Activated CD8-positive, alpha-beta T cell treated with anti-CD3 and anti-CD28 coated beads for 36 hours (primary cell): ENCODE measurements at regions of chr18 and their contacts with region 1.

Region 1: DNA sequence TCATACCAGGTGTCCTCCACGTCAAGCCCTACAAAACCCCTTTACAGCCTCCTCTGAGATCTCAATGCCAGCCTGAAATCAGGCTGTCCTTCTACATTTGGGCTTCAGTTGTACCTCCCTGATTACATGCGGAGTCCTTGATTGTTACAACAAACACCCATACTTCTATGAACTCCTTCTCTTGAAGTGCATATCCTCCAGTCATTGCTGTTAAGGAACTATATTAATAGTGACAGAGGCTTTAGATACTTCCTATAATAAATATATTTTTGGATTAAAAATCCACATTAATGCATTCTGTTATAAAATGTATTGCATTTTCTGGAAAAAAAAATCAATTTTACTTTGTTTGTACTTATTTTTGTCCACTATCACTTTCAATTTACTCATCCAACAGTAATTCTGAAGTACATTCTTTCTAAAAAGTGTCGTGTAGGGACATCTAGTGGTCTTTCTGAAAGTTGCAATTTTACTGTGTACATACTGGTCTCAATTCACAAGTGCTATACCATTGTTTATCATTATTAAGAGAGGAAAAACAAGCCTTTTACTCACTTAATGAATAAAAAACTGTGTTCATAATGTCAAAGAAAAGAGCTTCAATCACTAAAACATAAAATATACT is 316.4 kb downstream of the DSEL start:
- DNase-seq: no peak
- ATAC-seq: peak; percentile 83
- H3K4me3 Mint-ChIP-seq: no peak overlapping the region
- H3K27ac Mint-ChIP-seq: no peak overlapping the region
- H3K4me1 Mint-ChIP-seq: no peaks in the 10 kb centered on the region
- H3K27me3 Mint-ChIP-seq: peaks cover 7% of the 10 kb centered on the region
- CTCF ChIP-seq: peak; percentile 60

Region 2: GRCh38 chr18:67104700-67105284 is 95.3 kb before region 1 on chr18:
- CTCF ChIA-PET with region 1: interaction called, 25 read pairs
- POLR2A ChIA-PET with region 1: no interaction called
- intact Hi-C with region 1: loop called (anchors 2 kb)
- DNase-seq: peak; percentile 74
- ATAC-seq: peak; percentile 79
- H3K4me3 Mint-ChIP-seq: no peak overlapping the region
- H3K27ac Mint-ChIP-seq: no peak overlapping the region
- H3K4me1 Mint-ChIP-seq: no peaks in the 10 kb centered on the region
- H3K27me3 Mint-ChIP-seq: peaks cover 3% of the 10 kb centered on the region
- CTCF ChIP-seq: peak; percentile 66

Region 3: DNA sequence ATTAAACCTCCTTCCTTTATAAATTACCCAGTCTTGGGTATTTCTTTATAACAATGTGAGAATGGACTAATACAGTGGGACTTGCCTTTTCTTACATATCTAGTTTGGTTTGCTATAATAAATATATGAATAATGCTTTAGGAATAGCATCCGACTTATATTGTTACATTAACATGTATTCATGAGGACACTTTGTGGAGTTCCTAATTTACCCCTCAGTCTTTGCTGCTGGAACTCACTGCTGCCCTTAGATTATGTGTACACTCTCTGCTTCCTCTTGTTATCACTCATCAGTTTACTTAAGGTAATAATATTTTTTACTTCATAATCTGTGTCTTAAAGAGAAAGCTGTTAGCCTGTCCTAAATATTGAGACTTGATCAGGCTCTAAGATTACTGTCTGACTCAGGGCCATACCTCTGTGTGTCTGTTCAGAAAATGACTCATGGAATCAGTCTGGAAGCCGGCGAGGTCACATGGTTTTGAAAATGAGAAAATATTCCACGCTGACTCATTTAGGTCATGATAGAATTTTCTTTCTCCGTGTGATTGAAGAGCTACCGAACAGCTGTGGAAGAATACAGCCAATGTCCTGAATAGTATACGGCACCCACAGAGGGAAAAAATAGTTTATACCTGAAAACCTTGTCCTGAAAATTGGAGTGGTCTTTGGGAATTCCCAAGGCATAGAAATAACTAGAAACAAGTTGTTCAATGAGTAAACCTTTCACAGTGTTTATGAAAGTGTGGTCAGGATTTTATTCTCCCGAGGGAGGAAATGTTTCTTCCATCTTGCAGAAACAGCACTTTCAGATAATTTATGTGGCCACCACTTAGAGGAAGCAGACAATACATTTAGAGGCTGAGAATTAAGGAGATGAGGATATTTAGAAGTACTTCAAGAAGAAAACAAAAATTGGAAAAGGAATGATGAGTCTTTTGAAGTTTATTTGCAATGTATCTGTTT is 160.1 kb after region 1 on chr18:
- CTCF ChIA-PET with region 1: no interaction called
- POLR2A ChIA-PET with region 1: no interaction called
- intact Hi-C with region 1: no loop called
- DNase-seq: peak; percentile 58
- ATAC-seq: peak; percentile 97
- H3K4me3 Mint-ChIP-seq: no peak overlapping the region
- H3K27ac Mint-ChIP-seq: no peak overlapping the region
- H3K4me1 Mint-ChIP-seq: peaks cover 14% of the 10 kb centered on the region
- H3K27me3 Mint-ChIP-seq: peaks cover 2% of the 10 kb centered on the region
- CTCF ChIP-seq: no peak